WTC11 (cell line): ENCODE measurements at regions of chr7 and their contacts with region 1.

Region 1: GRCh38 chr7:24318326-24318725 is 34.3 kb downstream of the NPY start:
- DNase-seq: peak; percentile 41
- ATAC-seq: peak; percentile 95
- H3K4me3 Mint-ChIP-seq: no peak overlapping the region
- H3K27ac Mint-ChIP-seq: no peak overlapping the region
- H3K4me1 Mint-ChIP-seq: peaks cover 49% of the 10 kb centered on the region
- H3K27me3 Mint-ChIP-seq: no peaks in the 10 kb centered on the region
- CTCF ChIP-seq: 0 out of 2 replicates have a peak, but pooled peaks have one; percentile 31

Region 2: DNA sequence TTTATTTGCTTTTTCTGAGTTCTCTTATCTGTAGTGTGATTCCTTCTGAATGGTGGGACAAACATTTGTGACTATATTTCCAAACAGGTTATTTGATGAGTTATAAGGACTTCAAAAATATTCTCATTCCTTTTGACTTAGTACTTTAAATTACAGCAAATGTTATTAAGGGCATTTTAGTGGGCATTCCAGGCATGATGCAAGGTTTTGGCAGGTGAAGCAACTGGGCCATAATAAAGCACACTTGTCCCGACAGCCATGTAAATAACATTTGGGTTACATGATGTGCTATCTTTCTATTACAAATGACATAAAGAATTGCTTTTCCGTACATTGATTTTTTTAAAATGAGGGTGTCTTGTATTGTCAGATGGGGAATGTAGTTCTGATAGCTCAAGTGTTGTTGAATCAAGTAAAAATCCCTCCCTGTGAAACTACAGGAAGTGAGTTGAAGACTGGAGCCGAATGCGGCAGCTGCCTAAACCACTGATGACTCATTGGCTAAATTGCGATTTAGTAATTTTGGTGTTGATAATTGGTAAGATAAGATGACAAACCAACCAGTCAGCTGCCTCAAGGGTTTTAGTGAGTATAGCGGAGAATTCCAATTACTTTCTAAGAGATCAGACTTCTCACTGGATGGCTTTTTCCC is 265.6 kb before region 1 on chr7:
- CTCF ChIA-PET with region 1: no interaction called
- POLR2A ChIA-PET with region 1: no interaction called
- DNase-seq: no peak
- ATAC-seq: no peak
- H3K4me3 Mint-ChIP-seq: no peak overlapping the region
- H3K27ac Mint-ChIP-seq: no peak overlapping the region
- H3K4me1 Mint-ChIP-seq: peaks cover 16% of the 10 kb centered on the region
- H3K27me3 Mint-ChIP-seq: peaks cover 4% of the 10 kb centered on the region
- CTCF ChIP-seq: no peak

Region 3: GRCh38 chr7:24307317-24307716 is 11.0 kb before region 1 on chr7:
- CTCF ChIA-PET with region 1: interaction called, 30 read pairs
- POLR2A ChIA-PET with region 1: no interaction called
- DNase-seq: no peak
- ATAC-seq: no peak
- H3K4me3 Mint-ChIP-seq: no peak overlapping the region
- H3K27ac Mint-ChIP-seq: no peak overlapping the region
- H3K4me1 Mint-ChIP-seq: no peaks in the 10 kb centered on the region; the same call in 1 of the 2 replicates
- H3K27me3 Mint-ChIP-seq: no peaks in the 10 kb centered on the region; the same call in 1 of the 2 replicates
- CTCF ChIP-seq: no peak

Region 4: GRCh38 chr7:24341677-24342076 is 23.4 kb after region 1 on chr7:
- CTCF ChIA-PET with region 1: interaction called, 20 read pairs
- POLR2A ChIA-PET with region 1: no interaction called
- DNase-seq: no peak
- ATAC-seq: no peak
- H3K4me3 Mint-ChIP-seq: no peak overlapping the region
- H3K27ac Mint-ChIP-seq: no peak overlapping the region
- H3K4me1 Mint-ChIP-seq: peaks cover 28% of the 10 kb centered on the region
- H3K27me3 Mint-ChIP-seq: peaks cover 22% of the 10 kb centered on the region
- CTCF ChIP-seq: no peak

Region 5: GRCh38 chr7:24392774-24393173 is 74.4 kb after region 1 on chr7:
- CTCF ChIA-PET with region 1: interaction called, 11 read pairs
- POLR2A ChIA-PET with region 1: interaction called, 4 read pairs
- DNase-seq: no peak
- ATAC-seq: peak; percentile 69
- H3K4me3 Mint-ChIP-seq: no peak overlapping the region
- H3K27ac Mint-ChIP-seq: peak overlapping the region; percentile 71
- H3K4me1 Mint-ChIP-seq: peaks cover 41% of the 10 kb centered on the region
- H3K27me3 Mint-ChIP-seq: no peaks in the 10 kb centered on the region
- CTCF ChIP-seq: no peak

Region 6: DNA sequence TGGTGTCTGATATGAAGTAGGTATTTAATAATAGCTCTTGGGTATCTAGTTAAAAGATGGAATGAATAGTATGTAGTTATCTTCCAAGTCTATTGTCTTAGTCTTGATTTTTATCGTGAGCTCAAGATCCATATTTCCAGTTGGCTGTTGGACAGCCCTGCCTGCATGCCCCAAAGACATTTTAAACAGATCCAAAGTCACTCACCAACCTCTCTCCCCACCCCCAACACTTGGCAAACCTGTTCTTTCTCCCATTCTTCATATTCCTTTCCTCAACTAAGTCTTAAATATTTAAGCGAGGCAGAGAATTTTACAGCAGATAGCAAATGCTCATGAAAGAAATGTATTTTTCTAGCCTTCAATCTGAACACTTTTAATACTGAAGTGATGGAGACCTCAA is 174.2 kb after region 1 on chr7:
- CTCF ChIA-PET with region 1: no interaction called
- POLR2A ChIA-PET with region 1: no interaction called
- DNase-seq: no peak
- ATAC-seq: no peak
- H3K4me3 Mint-ChIP-seq: no peak overlapping the region
- H3K27ac Mint-ChIP-seq: no peak overlapping the region
- H3K4me1 Mint-ChIP-seq: peaks cover 18% of the 10 kb centered on the region
- H3K27me3 Mint-ChIP-seq: peaks cover 7% of the 10 kb centered on the region; the same call in 1 of the 2 replicates
- CTCF ChIP-seq: no peak

Region 7: DNA sequence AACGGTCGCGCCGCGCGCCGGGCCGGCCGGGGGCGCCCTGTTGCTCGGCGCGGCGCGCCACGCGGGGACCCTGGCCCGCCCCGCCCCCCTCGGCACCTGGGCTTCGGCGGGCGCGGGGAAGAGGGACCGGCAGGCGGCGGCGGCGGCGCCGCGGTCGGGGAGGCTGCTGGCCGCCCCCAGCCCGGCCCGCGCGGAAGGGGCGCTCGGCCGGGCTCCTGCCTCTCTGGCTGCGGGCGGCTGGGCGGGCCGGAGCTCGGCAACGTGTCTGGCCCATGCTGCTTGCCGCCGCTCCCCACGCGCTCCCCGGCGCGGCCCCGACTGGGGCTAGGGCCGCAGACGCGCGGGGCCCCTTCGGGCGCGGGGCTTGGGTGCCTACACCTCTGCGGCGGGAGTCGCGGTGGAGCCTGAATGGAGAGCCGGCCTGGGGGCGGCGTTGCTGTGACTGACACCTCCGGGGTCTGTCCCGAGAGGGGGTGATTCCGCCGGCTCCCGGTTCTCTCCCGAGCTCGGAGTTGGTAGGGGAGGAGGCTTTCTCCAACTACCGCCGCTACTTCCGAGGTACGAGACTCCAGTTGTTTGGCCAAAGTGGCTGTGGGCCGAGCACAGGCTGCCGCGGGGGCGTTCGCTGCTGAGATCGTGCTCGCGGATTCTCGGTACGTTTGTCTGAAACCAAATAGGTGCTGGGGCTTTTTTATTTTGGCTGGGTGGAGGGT is 255.5 kb after region 1 on chr7:
- CTCF ChIA-PET with region 1: interaction called, 14 read pairs
- POLR2A ChIA-PET with region 1: interaction called, 3 read pairs
- DNase-seq: peak; percentile 77
- ATAC-seq: peak; percentile 48
- H3K4me3 Mint-ChIP-seq: peak overlapping the region; percentile 97
- H3K27ac Mint-ChIP-seq: peak overlapping the region; percentile 82
- H3K4me1 Mint-ChIP-seq: peaks cover 66% of the 10 kb centered on the region
- H3K27me3 Mint-ChIP-seq: peaks cover 25% of the 10 kb centered on the region
- CTCF ChIP-seq: no peak

Region 8: GRCh38 chr7:24665564-24666294 is 347.4 kb after region 1 on chr7:
- CTCF ChIA-PET with region 1: interaction called, 10 read pairs
- POLR2A ChIA-PET with region 1: no interaction called
- DNase-seq: peak; percentile 23
- ATAC-seq: peak; percentile 72
- H3K4me3 Mint-ChIP-seq: no peak overlapping the region
- H3K27ac Mint-ChIP-seq: peak overlapping the region; percentile 59
- H3K4me1 Mint-ChIP-seq: peaks cover 38% of the 10 kb centered on the region
- H3K27me3 Mint-ChIP-seq: no peaks in the 10 kb centered on the region
- CTCF ChIP-seq: peak; percentile 46